Sciatic nerve (tissue), 2 donors: ENCODE measurements at regions of chr2 and their contacts with region 1.

Region 1: DNA sequence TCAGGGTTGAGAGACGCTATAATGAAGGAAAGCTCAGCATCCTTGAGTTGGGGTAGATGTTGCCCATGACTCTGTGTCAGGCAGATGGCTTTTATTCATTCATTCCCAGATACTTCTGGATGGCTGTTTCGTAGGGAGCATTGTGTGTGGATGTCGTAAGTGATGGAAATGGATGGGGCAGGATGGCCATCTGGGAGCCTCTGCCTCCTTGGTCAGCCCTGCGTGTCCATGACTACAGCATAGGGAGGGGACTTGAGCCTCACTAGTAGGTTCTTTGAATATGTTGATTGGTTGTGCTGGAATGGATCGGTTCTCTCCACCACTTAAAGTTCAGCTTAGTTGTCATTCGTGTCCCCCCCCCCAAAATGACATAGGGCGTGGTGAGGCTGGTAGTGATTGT is 44.9 kb downstream of the TGOLN2 start:
- DNase-seq: no peak
- ATAC-seq: no peak

Region 2: GRCh38 chr2:85133751-85134254 is 149.1 kb before region 1 on chr2:
- intact Hi-C with region 1: loop called (anchors 2 kb)
- DNase-seq: peak; percentile 71
- ATAC-seq: no peak